PC-9 (cell line): ENCODE measurements at regions of chr2 and their contacts with region 1.

Region 1: DNA sequence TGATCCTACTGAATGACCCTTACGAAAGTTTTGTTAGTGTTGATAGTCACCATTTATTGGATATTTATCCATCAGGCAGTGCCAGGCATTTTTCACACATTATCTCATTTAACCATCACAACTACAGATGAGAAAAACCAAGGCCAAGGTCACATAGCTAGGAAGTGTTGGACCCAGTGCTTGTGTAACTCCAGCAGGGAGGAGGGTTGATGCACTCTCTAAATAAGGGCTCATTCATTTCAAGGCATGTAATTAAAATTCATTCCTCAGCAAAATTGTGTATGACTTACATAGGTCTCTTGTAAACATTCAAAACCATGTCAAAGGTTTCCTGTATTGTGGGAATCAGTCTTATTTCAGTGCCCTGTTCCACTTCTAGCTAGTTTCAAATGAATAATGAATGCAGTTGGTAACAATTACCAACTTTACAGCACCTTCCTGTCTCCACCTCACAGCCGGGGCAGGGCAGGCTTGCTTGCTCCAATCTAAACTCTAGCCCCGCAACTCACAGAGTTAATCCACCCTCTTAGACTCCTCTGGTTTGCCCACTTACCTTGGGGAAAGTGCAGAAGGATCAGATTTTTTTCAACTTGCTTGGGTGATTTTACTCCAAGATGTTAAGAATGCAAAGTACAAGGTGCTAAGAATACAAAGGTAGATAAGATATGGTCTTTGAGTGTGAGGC is 5.8 kb upstream of the MAPRE3 start:
- DNase-seq: peak in 1 of 2 experiments; percentile 77
- H3K4me3 ChIP-seq: no peak overlapping the region
- H3K27ac ChIP-seq: peak overlapping the region; percentile 67
- H3K4me1 ChIP-seq: peaks cover 44% of the 10 kb centered on the region
- H3K27me3 ChIP-seq: no peaks in the 10 kb centered on the region
- CTCF ChIP-seq: no peak

Region 2: GRCh38 chr2:25790074-25790790 is 1174.4 kb before region 1 on chr2:
- CTCF ChIA-PET with region 1: no interaction called
- POLR2A ChIA-PET with region 1: no interaction called
- intact Hi-C with region 1: no loop called
- DNase-seq: no peak
- H3K4me3 ChIP-seq: no peak overlapping the region
- H3K27ac ChIP-seq: no peak overlapping the region
- H3K4me1 ChIP-seq: no peaks in the 10 kb centered on the region
- H3K27me3 ChIP-seq: no peaks in the 10 kb centered on the region
- CTCF ChIP-seq: no peak

Region 3: GRCh38 chr2:27211829-27212627 is 247.4 kb after region 1 on chr2 and contains the starts of genes ATRAID and SLC5A6:
- CTCF ChIA-PET with region 1: no interaction called
- POLR2A ChIA-PET with region 1: no interaction called
- intact Hi-C with region 1: loop called (anchors 5 kb)
- DNase-seq: peak; percentile 77 to 89
- H3K4me3 ChIP-seq: peak within 1 kb of the TSS; percentile 82
- H3K27ac ChIP-seq: peak within 1 kb of the TSS; percentile 82
- H3K4me1 ChIP-seq: peaks cover 36% of the 10 kb centered on the region
- H3K27me3 ChIP-seq: no peaks in the 10 kb centered on the region
- CTCF ChIP-seq: no peak
- total RNA-seq, gene ATRAID: 92.8 and 126 TPM in 2 replicates
- total RNA-seq, gene SLC5A6: 49.0 and 70.0 TPM in 2 replicates